Activated CD4-positive, alpha-beta T cell treated with anti-CD3 and anti-CD28 coated beads for 36 hours (primary cell): ENCODE measurements at regions of chr2 and their contacts with region 1.

Region 1: GRCh38 chr2:113390124-113390849 is 47.2 kb upstream of the ZNG1B start:
- DNase-seq: peak; percentile 71
- ATAC-seq: peak; percentile 85
- H3K4me3 Mint-ChIP-seq: peak overlapping the region; percentile 52
- H3K27ac Mint-ChIP-seq: peak overlapping the region; percentile 27
- H3K4me1 Mint-ChIP-seq: peaks cover 12% of the 10 kb centered on the region
- H3K27me3 Mint-ChIP-seq: peaks cover 5% of the 10 kb centered on the region

Region 2: DNA sequence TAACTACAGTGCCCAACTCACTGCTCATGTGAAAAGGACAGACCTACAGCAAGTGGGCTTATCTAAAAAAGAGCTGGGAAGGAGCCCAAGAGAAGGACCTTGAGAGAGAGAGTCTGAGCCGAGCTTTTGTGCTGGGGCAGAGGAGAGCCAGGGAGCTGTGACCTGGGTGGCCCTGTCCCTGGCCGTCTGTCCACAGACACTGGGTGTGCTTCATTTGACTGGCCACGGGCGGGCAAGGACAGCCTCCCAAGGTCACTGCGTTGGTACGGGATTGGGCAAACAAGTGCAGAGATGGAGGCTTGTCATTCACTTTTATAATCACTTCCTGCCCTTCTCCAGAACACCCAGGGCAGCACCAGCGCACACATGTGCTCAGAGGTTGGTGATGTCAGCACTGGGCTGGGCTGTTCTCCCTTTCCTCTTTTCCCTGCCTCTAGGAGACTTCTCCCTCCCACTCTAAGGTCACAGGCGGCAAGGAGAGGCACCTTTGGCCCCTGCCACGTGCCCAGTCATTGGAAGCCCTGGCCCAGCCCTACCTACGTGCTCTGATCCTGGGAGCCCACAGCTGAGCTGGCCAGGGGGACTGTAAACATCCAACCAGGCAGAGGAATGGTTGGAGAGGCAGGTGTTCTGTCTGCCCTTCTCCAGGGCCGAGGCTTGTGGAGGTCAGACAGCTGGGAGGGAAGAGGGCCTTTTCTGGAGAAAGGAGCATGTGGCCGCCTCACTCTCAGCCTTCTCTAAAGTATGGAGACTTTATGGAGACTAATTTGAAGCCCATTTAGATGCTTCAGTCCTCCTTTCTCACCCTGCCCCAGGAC is 223.0 kb before region 1 on chr2:
- CTCF ChIA-PET with region 1: no interaction called
- POLR2A ChIA-PET with region 1: no interaction called
- intact Hi-C with region 1: no loop called
- DNase-seq: peak; percentile 69
- ATAC-seq: peak; percentile 80
- H3K4me3 Mint-ChIP-seq: peak overlapping the region; percentile 44
- H3K27ac Mint-ChIP-seq: peak overlapping the region; percentile 94
- H3K4me1 Mint-ChIP-seq: peaks cover 66% of the 10 kb centered on the region
- H3K27me3 Mint-ChIP-seq: no peaks in the 10 kb centered on the region

Region 3: DNA sequence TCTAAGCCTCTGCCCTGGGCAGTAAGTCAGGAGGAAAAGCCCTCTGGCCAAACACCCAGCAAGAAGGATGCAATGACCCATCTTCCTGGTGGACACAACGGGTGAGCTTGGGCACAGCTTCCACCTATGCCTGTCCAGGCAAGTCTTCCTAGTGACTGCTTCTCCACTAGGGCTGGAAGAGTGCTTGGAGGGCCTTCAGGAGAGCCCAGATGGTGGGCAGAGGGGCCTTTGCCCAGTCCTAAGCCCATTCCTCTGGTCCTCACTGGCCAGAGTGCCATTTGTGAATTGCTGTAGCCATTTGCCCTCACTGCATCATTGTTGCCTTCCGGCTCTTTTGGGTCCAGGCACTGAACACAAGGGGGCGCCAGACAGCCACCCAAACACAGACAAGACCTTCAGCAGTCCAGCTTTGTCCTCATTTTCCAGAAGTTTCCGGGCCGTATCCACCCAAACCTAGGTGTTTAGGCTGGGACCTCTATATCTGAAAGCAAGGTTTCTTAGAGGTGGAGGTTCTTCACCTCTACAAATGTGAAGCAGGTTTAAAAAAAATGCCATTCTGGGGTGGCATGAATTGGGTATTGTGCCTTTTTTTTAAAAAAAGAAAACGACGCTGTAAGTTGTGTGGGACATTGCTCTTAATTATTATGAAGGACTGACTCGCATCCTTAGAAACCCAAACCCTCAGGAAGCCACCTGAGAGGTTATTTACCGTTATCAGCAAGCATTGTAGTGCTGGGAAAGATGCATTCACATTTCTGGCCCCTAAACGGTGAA is 141.1 kb before region 1 on chr2:
- CTCF ChIA-PET with region 1: interaction called, 38 read pairs
- POLR2A ChIA-PET with region 1: no interaction called
- intact Hi-C with region 1: loop called (anchors 1 to 2 kb)
- DNase-seq: peak; percentile 88
- ATAC-seq: peak; percentile 77
- H3K4me3 Mint-ChIP-seq: no peak overlapping the region
- H3K27ac Mint-ChIP-seq: no peak overlapping the region
- H3K4me1 Mint-ChIP-seq: peaks cover 44% of the 10 kb centered on the region
- H3K27me3 Mint-ChIP-seq: no peaks in the 10 kb centered on the region

Region 4: GRCh38 chr2:113298176-113298575 is 92.1 kb before region 1 on chr2:
- CTCF ChIA-PET with region 1: interaction called, 12 read pairs
- POLR2A ChIA-PET with region 1: no interaction called
- intact Hi-C with region 1: loop called in 1 of 2 experiments (anchors 1 kb)
- DNase-seq: no peak
- ATAC-seq: no peak
- H3K4me3 Mint-ChIP-seq: no peak overlapping the region
- H3K27ac Mint-ChIP-seq: no peak overlapping the region
- H3K4me1 Mint-ChIP-seq: no peaks in the 10 kb centered on the region
- H3K27me3 Mint-ChIP-seq: peaks cover 6% of the 10 kb centered on the region

Region 5: GRCh38 chr2:113376913-113377445 is 13.3 kb before region 1 on chr2:
- CTCF ChIA-PET with region 1: interaction called, 12 read pairs
- POLR2A ChIA-PET with region 1: no interaction called
- intact Hi-C with region 1: no loop called
- DNase-seq: no peak
- ATAC-seq: peak; percentile 89
- H3K4me3 Mint-ChIP-seq: no peak overlapping the region
- H3K27ac Mint-ChIP-seq: peak overlapping the region; percentile 69
- H3K4me1 Mint-ChIP-seq: peaks cover 13% of the 10 kb centered on the region
- H3K27me3 Mint-ChIP-seq: peaks cover 2% of the 10 kb centered on the region